HepG2 (cell line): ENCODE measurements at regions of chr15 and their contacts with region 1.

Region 1: DNA sequence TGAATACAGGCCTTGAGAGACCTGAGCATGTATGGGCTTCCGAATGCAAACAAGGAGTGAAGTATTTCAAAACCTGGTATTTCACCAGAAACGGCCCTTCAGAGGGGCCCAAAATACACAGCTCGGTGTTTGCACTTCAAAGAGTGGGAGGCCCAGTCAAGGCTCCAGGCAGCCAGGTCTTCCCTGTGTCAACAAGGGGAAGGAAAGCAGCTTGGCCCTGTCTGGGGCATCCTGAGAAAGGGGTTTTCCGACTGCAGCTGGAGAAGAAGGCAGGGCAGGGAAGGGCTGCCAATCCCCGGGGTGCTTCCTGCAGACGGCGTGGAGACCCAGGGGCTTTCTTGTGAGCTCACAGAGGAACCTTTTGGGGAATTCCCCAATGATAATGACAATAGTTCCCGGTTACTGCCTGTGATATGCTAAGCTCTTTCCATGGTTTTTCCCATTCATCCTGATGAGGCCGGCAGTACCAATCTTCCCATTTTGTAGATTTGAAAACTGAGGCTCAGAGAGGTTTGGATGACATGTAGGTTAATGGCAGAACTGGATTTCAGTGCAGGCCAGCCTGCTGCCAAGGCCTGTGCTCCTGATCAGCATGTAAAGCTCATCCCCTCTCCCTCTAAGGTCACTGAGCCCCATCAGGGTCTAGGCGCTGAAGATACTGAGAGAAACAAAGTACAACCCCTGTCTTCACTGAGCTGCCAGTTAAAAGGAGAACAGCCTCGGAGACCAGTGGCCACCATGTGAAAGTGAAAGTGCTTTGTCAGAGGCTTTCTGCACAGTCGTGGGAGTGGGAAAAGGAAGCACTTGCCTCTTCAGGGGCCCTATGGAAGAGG is 43.0 kb upstream of the TLE3 start:
- DNase-seq: peak; percentile 94
- ATAC-seq: peak; percentile 95
- H3K4me3 ChIP-seq: peak overlapping the region in 2 of 3 experiments; percentile 0 to 14; a peak in 2 of 6 replicates
- H3K27ac ChIP-seq: no peak overlapping the region
- H3K4me1 ChIP-seq: peaks cover 23% of the 10 kb centered on the region
- H3K27me3 ChIP-seq: peaks cover 10 to 88% of the 10 kb centered on the region in 2 experiments
- CTCF ChIP-seq: no peak
- EP300 ChIP-seq: peak; percentile 92 to 97
- POLR2A ChIP-seq: no peak
- RAD21 ChIP-seq: 0 out of 2 replicates have a peak, but pooled peaks have one; percentile 14

Region 2: DNA sequence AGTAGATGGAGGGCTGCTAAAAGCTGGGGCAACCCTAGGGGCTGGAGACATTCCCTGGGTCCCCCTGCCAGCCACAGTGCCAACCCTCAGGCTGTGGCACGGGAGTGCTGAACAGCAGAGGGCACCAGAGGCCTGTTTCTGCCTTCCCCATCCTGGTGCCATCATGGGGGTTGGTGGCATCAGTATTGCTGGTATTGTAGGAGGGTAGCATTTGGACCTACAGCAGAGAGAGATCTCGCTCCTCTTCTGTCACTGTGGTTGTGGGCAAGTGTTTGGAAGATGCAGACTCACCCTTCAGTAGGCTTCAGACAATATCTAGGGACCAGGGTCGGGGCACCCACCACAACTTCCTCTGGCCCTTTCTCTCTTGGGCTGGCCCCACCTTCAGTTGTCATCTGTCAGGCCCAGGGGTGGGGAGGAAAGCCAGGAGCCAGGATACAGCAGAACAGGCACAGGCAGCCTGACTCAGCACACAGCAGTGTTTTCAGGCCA is 564.7 kb before region 1 on chr15:
- CTCF ChIA-PET with region 1: no interaction called
- POLR2A ChIA-PET with region 1: no interaction called
- in situ Hi-C with region 1: loop called (anchors 25 kb)
- intact Hi-C with region 1: no loop called
- DNase-seq: no peak
- ATAC-seq: peak; percentile 41
- H3K4me3 ChIP-seq: no peak overlapping the region
- H3K27ac ChIP-seq: no peak overlapping the region
- H3K4me1 ChIP-seq: peaks cover 11% of the 10 kb centered on the region
- H3K27me3 ChIP-seq: peaks cover 13 to 96% of the 10 kb centered on the region in 2 experiments; a peak in 4 of 5 replicates
- CTCF ChIP-seq: peak; percentile 63
- EP300 ChIP-seq: no peak
- POLR2A ChIP-seq: no peak
- RAD21 ChIP-seq: 0 out of 2 replicates have a peak, but pooled peaks have one; percentile 39

Region 3: DNA sequence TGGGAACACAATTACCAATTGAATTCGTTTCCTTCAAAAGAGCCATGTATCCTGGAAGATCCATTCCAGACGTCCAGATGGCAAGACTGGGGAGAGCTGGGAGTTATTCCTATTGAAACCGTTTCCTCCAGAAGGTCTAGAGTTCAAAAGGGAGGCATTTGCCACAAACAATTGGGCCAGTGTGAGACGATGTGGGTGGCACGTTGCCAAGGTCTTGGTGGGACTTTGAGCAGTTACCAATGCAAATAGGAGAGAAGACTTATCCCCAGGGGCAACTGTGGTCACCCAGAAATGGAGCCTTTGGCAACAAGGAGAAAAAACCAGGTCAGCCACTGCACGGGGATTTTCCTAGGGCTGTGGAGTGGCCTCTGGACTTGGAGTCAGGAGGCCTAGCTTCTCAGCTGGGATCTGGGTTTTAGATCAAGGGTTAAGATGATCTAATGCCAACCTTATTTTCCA is 13.4 kb before region 1 on chr15:
- CTCF ChIA-PET with region 1: no interaction called
- POLR2A ChIA-PET with region 1: interaction called, 6 read pairs
- in situ Hi-C with region 1: no loop called
- intact Hi-C with region 1: loop called (anchors 1 kb)
- DNase-seq: peak; percentile 87
- ATAC-seq: peak; percentile 74
- H3K4me3 ChIP-seq: no peak overlapping the region
- H3K27ac ChIP-seq: peak overlapping the region; percentile 19
- H3K4me1 ChIP-seq: peaks cover 55% of the 10 kb centered on the region
- H3K27me3 ChIP-seq: peaks cover 2 to 74% of the 10 kb centered on the region in 2 experiments; a peak in 4 of 5 replicates
- CTCF ChIP-seq: no peak
- EP300 ChIP-seq: peak in 1 of 2 experiments; percentile 74; a peak in 2 of 4 replicates
- POLR2A ChIP-seq: no peak
- RAD21 ChIP-seq: no peak